BJ (cell line): ENCODE measurements at regions of chr2 and their contacts with region 1.

Region 1: GRCh38 chr2:204529795-204530463 is 15.3 kb upstream of the PARD3B start:
- DNase-seq: no peak
- H3K4me3 ChIP-seq: no peak overlapping the region
- H3K27me3 ChIP-seq: no peaks in the 10 kb centered on the region
- CTCF ChIP-seq: no peak

Region 2: GRCh38 chr2:204353823-204354222 is 176.1 kb before region 1 on chr2:
- CTCF ChIA-PET with region 1: no interaction called
- POLR2A ChIA-PET with region 1: interaction called, 11 read pairs
- DNase-seq: peak; percentile 24
- H3K4me3 ChIP-seq: no peak overlapping the region
- H3K27me3 ChIP-seq: no peaks in the 10 kb centered on the region
- CTCF ChIP-seq: no peak